IMR-90 (cell line): ENCODE measurements at regions of chr5 and their contacts with region 1.

Region 1: DNA sequence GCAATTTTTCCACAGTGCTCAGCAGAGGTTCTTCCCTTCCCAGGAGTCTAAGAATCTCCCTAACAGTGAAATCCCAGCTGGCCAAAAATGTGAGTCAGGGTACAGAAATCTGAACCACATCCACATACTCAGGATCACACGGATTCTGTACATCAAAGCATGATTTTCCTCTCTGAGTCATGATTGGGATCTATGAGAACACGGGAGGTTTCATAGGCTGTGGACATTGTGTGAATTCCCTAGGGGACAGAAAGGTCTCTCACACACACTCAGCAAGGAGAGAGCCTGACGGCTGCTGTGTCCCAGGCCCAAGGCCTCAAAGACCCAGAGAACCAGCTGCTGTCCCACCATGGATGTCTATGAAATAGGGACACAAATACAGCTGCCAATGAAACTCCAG is 102.9 kb downstream of the ADAMTS12 start:
- DNase-seq: peak; percentile 100
- ATAC-seq: peak; percentile 97
- H3K4me3 ChIP-seq: no peak overlapping the region
- H3K27ac ChIP-seq: peak overlapping the region; percentile 60
- H3K4me1 ChIP-seq: peaks cover 14% of the 10 kb centered on the region
- H3K27me3 ChIP-seq: no peaks in the 10 kb centered on the region
- CTCF ChIP-seq: no peak
- POLR2A ChIP-seq: peak; percentile 70; the same call in 1 of the 2 replicates
- RAD21 ChIP-seq: no peak

Region 2: DNA sequence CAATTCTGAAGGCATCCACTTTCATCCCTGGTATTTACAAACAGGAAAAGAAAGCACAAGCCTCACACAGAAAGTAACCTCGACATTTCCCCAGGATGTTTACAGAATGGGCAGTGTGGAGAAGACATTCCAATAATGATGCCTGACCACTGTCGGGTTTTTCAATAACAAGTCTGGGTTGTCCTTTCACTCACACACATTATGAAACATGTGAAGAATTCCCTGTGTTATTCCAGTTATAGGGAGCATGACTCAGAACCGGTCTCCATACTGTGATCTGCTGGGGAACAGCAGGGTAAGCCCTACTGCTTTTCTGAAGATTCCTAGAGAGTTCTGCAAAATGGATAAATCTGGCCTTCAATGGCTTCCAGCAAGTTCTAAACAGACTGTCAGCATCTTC is 52.4 kb before region 1 on chr5:
- CTCF ChIA-PET with region 1: no interaction called
- POLR2A ChIA-PET with region 1: no interaction called
- dilution Hi-C with region 1: no loop called
- in situ Hi-C with region 1: no loop called
- intact Hi-C with region 1: loop called (anchors 2 kb)
- DNase-seq: peak; percentile 95
- ATAC-seq: peak; percentile 95
- H3K4me3 ChIP-seq: no peak overlapping the region
- H3K27ac ChIP-seq: peak overlapping the region; percentile 28; the same call in 1 of the 2 replicates
- H3K4me1 ChIP-seq: peaks cover 13% of the 10 kb centered on the region
- H3K27me3 ChIP-seq: no peaks in the 10 kb centered on the region
- CTCF ChIP-seq: no peak
- POLR2A ChIP-seq: no peak
- RAD21 ChIP-seq: 0 out of 2 replicates have a peak, but pooled peaks have one; percentile 4

Region 3: DNA sequence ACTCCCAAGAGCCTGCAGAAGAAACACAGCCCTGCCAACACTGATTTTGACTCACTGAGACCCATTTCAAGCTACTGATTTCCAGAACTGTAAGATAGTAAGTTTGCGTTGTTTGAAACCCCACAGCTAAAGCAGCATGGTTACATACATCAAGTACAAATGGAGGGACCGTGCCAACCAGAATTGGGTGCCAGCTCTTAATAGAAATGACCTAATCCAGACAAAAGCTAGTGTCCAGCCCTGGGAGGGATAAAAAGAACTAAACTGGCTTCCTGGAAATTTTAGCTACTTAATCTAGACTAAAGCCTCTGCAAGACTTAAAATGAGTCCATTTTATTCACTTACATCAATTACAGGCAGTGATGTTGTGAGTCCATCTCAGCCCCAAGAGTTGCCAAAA is 19.7 kb before region 1 on chr5:
- CTCF ChIA-PET with region 1: interaction called, 10 read pairs
- POLR2A ChIA-PET with region 1: no interaction called
- dilution Hi-C with region 1: no loop called
- in situ Hi-C with region 1: no loop called
- intact Hi-C with region 1: no loop called
- DNase-seq: no peak
- ATAC-seq: no peak
- H3K4me3 ChIP-seq: no peak overlapping the region
- H3K27ac ChIP-seq: no peak overlapping the region
- H3K4me1 ChIP-seq: peaks cover 11% of the 10 kb centered on the region
- H3K27me3 ChIP-seq: no peaks in the 10 kb centered on the region
- CTCF ChIP-seq: no peak
- POLR2A ChIP-seq: no peak
- RAD21 ChIP-seq: no peak